ENCODE measurements at regions of chr14 and their contacts with region 1.

Region 1: GRCh38 chr14:105065280-105066228 is at the start of gene GPR132:
- DNase-seq: peak; percentile 71 to 98 (median 92)
- ATAC-seq: peak; percentile 89 to 92
- H3K4me3 Mint-ChIP-seq: peak within 1 kb of the TSS; percentile 81 to 99 (median 94)
- H3K27ac Mint-ChIP-seq: peak within 1 kb of the TSS; percentile 94 to 99 (median 98)
- H3K4me1 Mint-ChIP-seq: peaks cover 25 to 87% (median 85%) of the 10 kb centered on the region in 4 donors
- H3K27me3 Mint-ChIP-seq: no peaks in the 10 kb centered on the region
- polyA plus RNA-seq, gene GPR132: 9.4 to 37.2 (median 9.7) TPM

Region 2: GRCh38 chr14:104865644-104866441 is 199.7 kb before region 1 on chr14:
- POLR2A ChIA-PET with region 1: no interaction called
- DNase-seq: peak in 1 of 10 donors; percentile 16
- ATAC-seq: peak; percentile 29 to 57
- H3K4me3 Mint-ChIP-seq: peak overlapping the region; percentile 4 to 81 (median 64)
- H3K27ac Mint-ChIP-seq: peak overlapping the region in 2 of 10 donors; percentile 11 to 61
- H3K4me1 Mint-ChIP-seq: peaks cover 7 to 12% (median 9%) of the 10 kb centered on the region in 4 donors
- H3K27me3 Mint-ChIP-seq: peaks cover 1 to 38% (median 12%) of the 10 kb centered on the region in 5 donors

Region 3: GRCh38 chr14:105020815-105021655 is 44.5 kb before region 1 on chr14 and contains the start of gene CDCA4:
- POLR2A ChIA-PET with region 1: interaction called, 25 read pairs
- DNase-seq: peak; percentile 93 to 100 (median 97)
- ATAC-seq: peak; percentile 83 to 84
- H3K4me3 Mint-ChIP-seq: peak within 1 kb of the TSS; percentile 87 to 95 (median 92)
- H3K27ac Mint-ChIP-seq: peak within 1 kb of the TSS; percentile 91 to 97 (median 94)
- H3K4me1 Mint-ChIP-seq: peaks cover 22 to 76% (median 52%) of the 10 kb centered on the region in 4 donors
- H3K27me3 Mint-ChIP-seq: no peaks in the 10 kb centered on the region
- polyA plus RNA-seq, gene CDCA4: 8.2 to 12.0 (median 11.3) TPM

Region 4: DNA sequence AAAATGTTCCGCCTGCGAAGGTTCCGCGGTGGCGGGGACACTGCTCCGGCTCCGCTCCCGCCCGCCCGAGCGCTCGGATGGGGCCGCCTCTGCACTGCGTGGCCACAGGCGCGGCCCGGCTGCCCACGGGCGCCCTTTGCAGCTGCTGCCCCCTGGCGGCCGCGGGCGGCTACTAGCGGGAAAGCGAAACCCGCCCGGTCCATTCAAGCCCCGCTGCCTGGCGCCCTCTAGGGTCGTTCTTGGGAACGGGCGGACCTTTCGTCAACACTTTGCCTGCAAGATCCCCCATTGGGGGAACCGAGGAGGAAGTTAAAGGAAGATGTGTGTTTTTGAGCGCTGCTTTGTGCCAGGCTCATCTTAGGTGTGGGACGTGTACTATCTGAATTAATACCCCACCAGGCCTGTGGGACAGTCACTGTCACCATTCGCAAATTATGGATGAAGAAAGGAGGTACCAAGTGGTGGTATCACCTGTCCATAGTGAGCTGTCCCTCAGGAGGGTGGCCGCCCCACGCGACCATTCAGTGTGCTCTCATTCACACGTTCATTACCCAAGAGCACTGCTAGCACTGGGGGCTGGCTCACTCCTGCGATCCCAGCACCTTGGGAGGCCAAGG is 19.7 kb before region 1 on chr14:
- POLR2A ChIA-PET with region 1: interaction called, 10 read pairs
- DNase-seq: peak; percentile 84 to 96 (median 92)
- ATAC-seq: peak; percentile 78 to 91
- H3K4me3 Mint-ChIP-seq: peak overlapping the region in 8 of 10 donors; percentile 15 to 52 (median 39)
- H3K27ac Mint-ChIP-seq: peak overlapping the region; percentile 64 to 93 (median 81)
- H3K4me1 Mint-ChIP-seq: peaks cover 8 to 17% (median 14%) of the 10 kb centered on the region in 4 donors
- H3K27me3 Mint-ChIP-seq: no peaks in the 10 kb centered on the region

Region 5: GRCh38 chr14:105075379-105076295 is 10.1 kb after region 1 on chr14:
- POLR2A ChIA-PET with region 1: interaction called, 254 read pairs
- DNase-seq: peak in 5 of 10 donors; percentile 32 to 73 (median 49)
- ATAC-seq: peak; percentile 68 to 70
- H3K4me3 Mint-ChIP-seq: peak overlapping the region; percentile 4 to 85 (median 62)
- H3K27ac Mint-ChIP-seq: peak overlapping the region; percentile 53 to 94 (median 88)
- H3K4me1 Mint-ChIP-seq: peaks cover 21 to 64% (median 55%) of the 10 kb centered on the region in 4 donors
- H3K27me3 Mint-ChIP-seq: no peaks in the 10 kb centered on the region

Region 6: DNA sequence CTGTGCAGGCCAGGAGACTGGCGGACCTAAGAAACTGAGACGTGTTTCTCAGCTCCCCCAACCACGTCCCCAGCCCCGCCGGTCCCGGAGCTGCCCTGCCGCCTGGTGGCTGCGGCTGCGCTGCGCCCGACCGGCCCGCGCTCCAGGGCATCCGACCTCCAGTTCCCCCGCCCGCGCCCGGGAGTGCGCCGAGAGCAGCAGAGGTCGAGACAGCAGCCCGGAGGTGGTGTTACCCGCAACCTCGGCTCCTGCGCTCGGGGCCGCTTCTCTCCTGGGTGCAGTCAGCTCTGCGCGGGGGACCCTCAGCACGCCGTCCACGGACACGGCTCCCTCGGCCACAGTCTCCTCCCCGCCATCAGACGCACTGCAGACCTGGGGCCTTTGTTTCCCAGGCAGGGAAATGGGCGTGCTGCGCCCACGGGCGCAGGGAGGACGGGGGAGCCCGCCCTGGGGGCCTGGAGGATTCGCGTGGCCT is 21.3 kb after region 1 on chr14:
- POLR2A ChIA-PET with region 1: interaction called, 234 read pairs
- DNase-seq: peak; percentile 74 to 91 (median 84)
- ATAC-seq: peak; percentile 86 to 89
- H3K4me3 Mint-ChIP-seq: peak overlapping the region; percentile 74 to 86 (median 79)
- H3K27ac Mint-ChIP-seq: peak overlapping the region in 8 of 10 donors; percentile 75 to 92 (median 84)
- H3K4me1 Mint-ChIP-seq: peaks cover 14 to 33% (median 25%) of the 10 kb centered on the region in 4 donors
- H3K27me3 Mint-ChIP-seq: no peaks in the 10 kb centered on the region

Region 7: GRCh38 chr14:105107781-105108515 is 42.4 kb after region 1 on chr14:
- POLR2A ChIA-PET with region 1: no interaction called
- DNase-seq: no peak
- ATAC-seq: no peak
- H3K4me3 Mint-ChIP-seq: no peak overlapping the region
- H3K27ac Mint-ChIP-seq: no peak overlapping the region
- H3K4me1 Mint-ChIP-seq: peaks cover 0 to 6% (median 0%) of the 10 kb centered on the region in 4 donors
- H3K27me3 Mint-ChIP-seq: peaks cover 18 to 39% (median 26%) of the 10 kb centered on the region in 5 donors

Measured in naive thymus-derived CD8-positive, alpha-beta T cell (primary cell).